ENCODE measurements at regions of chr14 and their contacts with region 1.

Region 1: GRCh38 chr14:90903101-90903500 is 86.9 kb upstream of the TTC7B start:
- DNase-seq: peak; percentile 81
- H3K4me3 Mint-ChIP-seq: no peak overlapping the region
- H3K27ac Mint-ChIP-seq: no peak overlapping the region
- H3K4me1 Mint-ChIP-seq: peaks cover 25% of the 10 kb centered on the region
- H3K27me3 Mint-ChIP-seq: no peaks in the 10 kb centered on the region

Region 2: GRCh38 chr14:90892970-90893369 is 10.1 kb before region 1 on chr14:
- CTCF ChIA-PET with region 1: interaction called, 19 read pairs
- intact Hi-C with region 1: no loop called
- DNase-seq: no peak
- H3K4me3 Mint-ChIP-seq: no peak overlapping the region
- H3K27ac Mint-ChIP-seq: no peak overlapping the region
- H3K4me1 Mint-ChIP-seq: peaks cover 2% of the 10 kb centered on the region
- H3K27me3 Mint-ChIP-seq: no peaks in the 10 kb centered on the region

Region 3: DNA sequence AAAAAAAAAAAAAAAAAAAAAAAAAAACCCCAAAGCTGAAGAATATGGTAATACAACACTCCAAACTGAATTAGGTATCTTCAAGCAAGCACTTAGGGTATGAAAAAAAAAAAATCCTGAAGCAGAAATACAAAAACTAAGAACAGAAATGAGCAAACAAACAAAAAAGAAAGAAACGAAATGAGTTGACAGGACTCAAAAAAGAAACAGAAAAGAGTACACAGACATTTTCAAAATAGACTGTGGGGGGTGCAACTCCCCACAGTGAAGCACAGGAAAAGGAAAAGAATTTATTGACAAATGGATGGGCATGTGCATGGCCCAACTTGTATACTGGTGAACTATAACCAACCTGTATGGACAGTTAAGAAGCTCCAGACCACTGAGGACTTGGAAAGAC is 132.8 kb after region 1 on chr14:
- CTCF ChIA-PET with region 1: interaction called, 8 read pairs
- intact Hi-C with region 1: loop called (anchors 1 kb)
- DNase-seq: peak; percentile 34
- H3K4me3 Mint-ChIP-seq: no peak overlapping the region
- H3K27ac Mint-ChIP-seq: peak overlapping the region; percentile 68
- H3K4me1 Mint-ChIP-seq: peaks cover 66% of the 10 kb centered on the region
- H3K27me3 Mint-ChIP-seq: no peaks in the 10 kb centered on the region

Region 4: DNA sequence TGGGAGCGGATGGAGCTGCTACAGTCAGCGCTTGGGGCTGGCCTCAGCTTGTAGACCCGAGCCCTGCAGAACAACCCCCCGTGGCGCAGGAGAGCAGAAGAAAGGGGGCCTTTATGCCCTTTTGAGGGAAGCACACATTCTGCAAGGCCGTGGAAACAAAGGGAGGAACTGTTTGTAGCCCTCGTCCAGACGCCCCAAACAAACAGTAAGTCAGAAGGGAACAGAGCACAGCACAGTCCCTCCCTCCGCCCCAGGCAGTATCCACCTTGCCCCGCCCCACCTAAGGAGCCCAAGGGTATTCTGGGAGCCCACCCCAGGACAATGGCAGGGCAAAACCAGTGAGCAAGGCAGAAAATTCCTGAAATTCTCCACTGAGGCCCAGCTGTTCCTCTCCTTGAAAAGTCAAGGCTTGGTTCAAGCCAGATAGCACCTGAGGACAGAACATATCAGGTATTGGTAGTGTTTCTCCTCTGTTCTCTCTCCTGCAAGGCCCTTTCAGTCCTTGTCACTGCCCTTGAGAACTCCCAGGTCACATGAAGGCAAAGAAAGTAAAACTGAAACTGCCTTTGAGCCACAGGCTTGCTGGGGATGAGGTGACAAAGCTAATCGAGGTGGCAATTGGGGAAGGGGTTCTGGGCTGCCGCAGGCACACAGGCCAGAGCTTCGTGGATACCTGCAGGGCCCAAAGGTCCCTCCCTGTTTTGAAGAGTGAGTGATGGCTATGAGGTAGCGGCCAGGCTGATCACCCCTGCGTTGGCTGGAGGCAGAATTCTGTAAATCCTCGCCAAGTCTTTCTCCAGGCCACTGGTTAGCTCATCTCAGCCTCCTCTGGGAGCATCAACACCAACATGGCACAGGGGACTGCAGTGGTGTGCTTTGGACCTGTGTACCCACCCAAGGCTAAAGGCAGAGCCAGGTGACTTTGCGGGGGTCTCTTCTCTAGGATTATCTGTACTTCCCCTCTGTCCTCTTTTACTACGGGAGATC is 211.3 kb after region 1 on chr14:
- CTCF ChIA-PET with region 1: interaction called, 13 read pairs
- intact Hi-C with region 1: loop called (anchors 1 kb)
- DNase-seq: peak; percentile 82
- H3K4me3 Mint-ChIP-seq: peak overlapping the region; percentile 94
- H3K27ac Mint-ChIP-seq: peak overlapping the region; percentile 95
- H3K4me1 Mint-ChIP-seq: peaks cover 60% of the 10 kb centered on the region
- H3K27me3 Mint-ChIP-seq: no peaks in the 10 kb centered on the region

Region 5: GRCh38 chr14:91138511-91139359 is 235.6 kb after region 1 on chr14:
- CTCF ChIA-PET with region 1: interaction called, 11 read pairs
- intact Hi-C with region 1: loop called (anchors 1 kb)
- DNase-seq: peak; percentile 80
- H3K4me3 Mint-ChIP-seq: no peak overlapping the region
- H3K27ac Mint-ChIP-seq: peak overlapping the region; percentile 59
- H3K4me1 Mint-ChIP-seq: peaks cover 43% of the 10 kb centered on the region
- H3K27me3 Mint-ChIP-seq: no peaks in the 10 kb centered on the region

Region 6: DNA sequence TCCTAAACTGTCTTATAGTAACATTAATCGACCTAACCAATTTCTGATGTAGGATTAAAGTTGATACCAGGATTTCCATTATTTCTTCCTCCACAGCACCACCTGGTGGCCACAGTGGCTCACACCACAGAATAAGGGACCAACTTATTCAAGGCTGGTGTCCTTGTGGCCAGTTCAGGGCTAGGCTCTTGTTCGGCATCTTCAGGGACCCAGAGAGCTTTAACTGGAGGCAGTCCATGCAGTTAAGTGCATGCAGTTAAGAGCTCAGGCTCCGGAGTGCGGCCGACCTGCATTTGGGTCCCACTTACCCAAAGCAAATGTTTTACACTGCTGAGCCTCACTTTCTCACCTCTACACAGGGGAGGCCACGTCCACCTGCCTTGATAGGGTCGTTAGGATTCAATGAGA is 383.4 kb after region 1 on chr14:
- CTCF ChIA-PET with region 1: interaction called, 8 read pairs
- intact Hi-C with region 1: loop called (anchors 1 kb)
- DNase-seq: peak; percentile 90
- H3K4me3 Mint-ChIP-seq: no peak overlapping the region
- H3K27ac Mint-ChIP-seq: peak overlapping the region; percentile 74
- H3K4me1 Mint-ChIP-seq: peaks cover 4% of the 10 kb centered on the region
- H3K27me3 Mint-ChIP-seq: no peaks in the 10 kb centered on the region